Activated CD8-positive, alpha-beta T cell treated with anti-CD3 and anti-CD28 coated beads, Interleukin-2, amount 10 ng/mL, durations not matched to agents 7 days and 5 days (primary cell): ENCODE measurements at regions of chr7 and their contacts with region 1.

Region 1: DNA sequence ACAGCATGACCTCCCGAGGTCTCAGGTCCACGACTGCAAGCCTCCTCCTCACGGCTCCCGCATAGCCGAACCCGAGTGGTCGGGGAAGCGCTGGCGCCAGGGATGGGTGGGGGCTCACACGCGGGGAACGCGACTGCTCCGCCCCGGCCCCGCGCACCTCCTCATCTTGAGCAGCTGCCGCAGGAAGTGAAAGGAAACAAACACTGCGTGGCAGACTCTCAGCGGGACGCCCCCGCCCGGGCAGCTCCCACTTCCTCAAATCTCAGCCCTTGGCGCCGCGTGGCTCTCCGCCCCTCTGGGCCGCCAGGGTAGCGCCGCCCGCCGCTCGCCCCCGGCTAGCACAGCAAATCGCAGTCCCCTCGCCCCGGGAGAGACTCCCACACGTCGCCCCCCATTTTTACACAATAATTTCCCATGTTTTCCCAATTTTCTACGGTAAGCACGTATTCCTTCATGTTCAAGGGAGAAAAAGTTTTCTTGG is at the start of gene TMEM243:
- DNase-seq: peak; percentile 88
- ATAC-seq: peak; percentile 73
- H3K4me3 Mint-ChIP-seq: peak within 1 kb of the TSS; percentile 99
- H3K27ac Mint-ChIP-seq: peak within 1 kb of the TSS; percentile 99
- H3K4me1 Mint-ChIP-seq: peaks cover 37% of the 10 kb centered on the region
- H3K27me3 Mint-ChIP-seq: peaks cover 6% of the 10 kb centered on the region
- total RNA-seq, gene TMEM243: 39.6 to 42.4 TPM

Region 2: GRCh38 chr7:87173471-87173870 is 46.1 kb before region 1 on chr7:
- CTCF ChIA-PET with region 1: interaction called, 5 read pairs
- POLR2A ChIA-PET with region 1: interaction called, 10 read pairs
- DNase-seq: no peak
- ATAC-seq: no peak
- H3K4me3 Mint-ChIP-seq: no peak overlapping the region
- H3K27ac Mint-ChIP-seq: no peak overlapping the region
- H3K4me1 Mint-ChIP-seq: no peaks in the 10 kb centered on the region
- H3K27me3 Mint-ChIP-seq: no peaks in the 10 kb centered on the region

Region 3: DNA sequence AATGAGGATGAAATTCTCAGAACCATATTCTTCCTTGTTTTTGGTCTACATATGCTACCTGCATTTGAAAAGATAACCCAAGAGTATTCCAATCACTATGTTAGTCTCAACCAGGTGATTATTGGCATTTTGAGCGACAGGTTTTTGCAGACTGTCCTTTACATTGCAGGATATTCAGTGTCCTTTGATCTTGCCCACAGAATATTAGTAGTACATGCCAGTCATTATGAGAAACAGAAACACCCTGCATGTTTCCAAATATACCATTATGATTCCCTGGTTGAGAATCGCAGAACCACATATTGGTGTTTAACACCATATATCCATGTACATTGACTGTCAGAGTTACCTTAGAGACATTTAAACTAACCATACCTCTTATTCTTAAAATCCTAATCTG is 30.7 kb before region 1 on chr7:
- CTCF ChIA-PET with region 1: interaction called, 4 read pairs
- POLR2A ChIA-PET with region 1: interaction called, 11 read pairs
- DNase-seq: no peak
- ATAC-seq: no peak
- H3K4me3 Mint-ChIP-seq: no peak overlapping the region
- H3K27ac Mint-ChIP-seq: no peak overlapping the region
- H3K4me1 Mint-ChIP-seq: peaks cover 9% of the 10 kb centered on the region
- H3K27me3 Mint-ChIP-seq: no peaks in the 10 kb centered on the region

Region 4: GRCh38 chr7:87199700-87200450 is 19.7 kb before region 1 on chr7:
- CTCF ChIA-PET with region 1: interaction called, 4 read pairs
- POLR2A ChIA-PET with region 1: interaction called, 18 read pairs
- DNase-seq: no peak
- ATAC-seq: no peak
- H3K4me3 Mint-ChIP-seq: no peak overlapping the region
- H3K27ac Mint-ChIP-seq: peak overlapping the region; percentile 43
- H3K4me1 Mint-ChIP-seq: peaks cover 19% of the 10 kb centered on the region
- H3K27me3 Mint-ChIP-seq: no peaks in the 10 kb centered on the region

Region 5: DNA sequence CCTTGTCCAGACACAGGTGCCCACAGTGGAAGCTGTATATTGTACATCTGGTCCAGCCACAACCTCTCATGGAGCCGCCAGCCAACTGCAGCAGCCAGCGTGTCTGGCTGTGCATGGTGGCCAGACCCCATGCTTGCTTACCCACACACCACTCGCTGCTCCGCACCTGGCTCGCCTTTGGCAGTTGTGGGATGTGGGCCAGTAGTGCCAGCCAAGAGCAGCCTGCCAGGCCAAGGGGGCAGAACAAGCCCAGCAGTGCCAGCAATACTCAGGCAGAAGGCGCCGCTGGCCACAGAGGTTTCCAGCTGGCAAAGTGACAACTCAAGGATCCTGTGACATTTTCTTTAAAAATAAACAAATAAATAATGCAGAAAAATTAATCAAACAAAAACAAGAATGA is 11.7 kb after region 1 on chr7:
- CTCF ChIA-PET with region 1: interaction called, 29 read pairs
- POLR2A ChIA-PET with region 1: interaction called, 6 read pairs
- DNase-seq: no peak
- ATAC-seq: no peak
- H3K4me3 Mint-ChIP-seq: no peak overlapping the region
- H3K27ac Mint-ChIP-seq: no peak overlapping the region
- H3K4me1 Mint-ChIP-seq: peaks cover 7% of the 10 kb centered on the region
- H3K27me3 Mint-ChIP-seq: peaks cover 12% of the 10 kb centered on the region